ENCODE measurements at regions of chr2 and their contacts with region 1.

Region 1: GRCh38 chr2:69914170-69914960 is 544 bp upstream of the MXD1 start:
- DNase-seq: peak; percentile 99 to 100
- ATAC-seq: peak; percentile 94 to 95
- H3K4me3 ChIP-seq: peak overlapping the region; percentile 57
- H3K27ac ChIP-seq: peak overlapping the region; percentile 86 to 95
- H3K4me1 ChIP-seq: peaks cover 17% of the 10 kb centered on the region; the same call in 2 of the 3 replicates
- CTCF ChIP-seq: peak; percentile 42
- EP300 ChIP-seq: no peak
- POLR2A ChIP-seq: peak; percentile 88
- RAD21 ChIP-seq: peak; percentile 50 to 71

Region 2: DNA sequence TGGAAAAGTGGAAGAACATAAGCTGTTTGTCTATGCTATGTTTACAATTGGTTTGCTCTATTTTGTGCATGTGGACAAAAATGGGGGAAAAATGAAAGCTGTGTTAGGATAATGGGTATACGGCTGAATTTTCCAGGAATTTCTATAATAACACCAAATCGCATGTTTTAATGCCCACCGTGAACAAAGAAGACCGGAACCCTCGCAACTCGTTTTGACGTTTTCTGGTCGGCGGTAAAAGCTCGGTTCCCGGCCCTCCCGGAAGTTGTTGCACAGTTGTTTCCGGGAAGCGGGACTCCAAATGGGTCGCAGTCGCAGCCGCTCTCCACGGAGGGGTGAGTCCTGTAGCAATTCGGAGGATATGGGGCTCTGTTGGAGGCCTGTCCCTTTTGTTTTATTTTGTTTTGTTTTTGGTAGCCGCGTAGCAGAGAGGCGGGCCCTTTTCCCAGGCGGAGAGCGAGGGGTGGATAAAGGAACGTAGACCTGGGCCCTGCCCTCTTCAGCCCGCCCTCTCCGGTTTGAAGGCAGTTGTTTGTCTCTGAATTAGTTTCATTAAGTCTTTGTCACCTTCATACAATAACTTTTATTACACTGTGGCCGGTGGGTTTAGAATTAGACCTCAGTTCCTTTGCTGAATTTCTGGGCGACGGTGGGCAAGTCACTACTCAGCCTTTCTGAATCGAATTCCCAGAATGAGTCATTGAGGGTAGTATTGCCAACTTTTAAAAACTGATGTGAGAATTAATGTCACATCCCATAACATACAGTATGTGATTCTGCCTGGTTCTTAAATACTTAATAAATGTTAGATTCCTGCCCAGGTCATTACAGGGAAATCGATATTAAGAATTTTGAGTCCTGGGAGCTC is 20.4 kb before region 1 on chr2 and contains the start of gene SNRNP27:
- CTCF ChIA-PET with region 1: interaction called, 24 read pairs
- POLR2A ChIA-PET with region 1: interaction called, 17 read pairs
- DNase-seq: peak; percentile 89 to 94
- ATAC-seq: peak; percentile 90 to 93
- H3K4me3 ChIP-seq: peak within 1 kb of the TSS; percentile 69
- H3K27ac ChIP-seq: peak within 1 kb of the TSS; percentile 75 to 88
- H3K4me1 ChIP-seq: peaks cover 8% of the 10 kb centered on the region; the same call in 2 of the 3 replicates
- CTCF ChIP-seq: no peak
- EP300 ChIP-seq: no peak
- POLR2A ChIP-seq: peak; percentile 52
- RAD21 ChIP-seq: no peak; a peak in 1 of 5 replicates
- polyA plus RNA-seq, gene SNRNP27: 53.0 and 115 TPM in 2 replicates

Region 3: GRCh38 chr2:69946351-69947077 is 32.1 kb after region 1 on chr2:
- CTCF ChIA-PET with region 1: interaction called, 18 read pairs
- POLR2A ChIA-PET with region 1: interaction called, 3 read pairs
- DNase-seq: peak; percentile 60 to 69
- ATAC-seq: peak; percentile 82 to 84
- H3K4me3 ChIP-seq: no peak overlapping the region
- H3K27ac ChIP-seq: peak overlapping the region; percentile 49 to 69; a peak in 5 of 6 replicates
- H3K4me1 ChIP-seq: peaks cover 19% of the 10 kb centered on the region
- CTCF ChIP-seq: no peak
- EP300 ChIP-seq: no peak
- POLR2A ChIP-seq: no peak
- RAD21 ChIP-seq: no peak

Region 4: GRCh38 chr2:70070541-70071268 is 156.3 kb after region 1 on chr2:
- CTCF ChIA-PET with region 1: interaction called, 161 read pairs
- POLR2A ChIA-PET with region 1: interaction called, 27 read pairs
- DNase-seq: peak; percentile 92 to 97
- ATAC-seq: peak; percentile 99 to 100
- H3K4me3 ChIP-seq: no peak overlapping the region
- H3K27ac ChIP-seq: peak overlapping the region; percentile 8 to 54; a peak in 4 of 6 replicates
- H3K4me1 ChIP-seq: 0 out of 3 replicates have a peak, but pooled peaks cover 3% of the 10 kb centered on the region
- CTCF ChIP-seq: peak; percentile 79
- EP300 ChIP-seq: no peak
- POLR2A ChIP-seq: no peak
- RAD21 ChIP-seq: peak; percentile 80 to 87

Region 5: GRCh38 chr2:70124983-70125480 is 210.7 kb after region 1 on chr2:
- CTCF ChIA-PET with region 1: interaction called, 12 read pairs
- POLR2A ChIA-PET with region 1: interaction called, 42 read pairs
- DNase-seq: peak; percentile 70 to 71
- ATAC-seq: peak; percentile 83 to 86
- H3K4me3 ChIP-seq: peak overlapping the region; percentile 52
- H3K27ac ChIP-seq: peak overlapping the region; percentile 96 to 99
- H3K4me1 ChIP-seq: peaks cover 34% of the 10 kb centered on the region
- CTCF ChIP-seq: 0 out of 3 replicates have a peak, but pooled peaks have one; percentile 3
- EP300 ChIP-seq: no peak
- POLR2A ChIP-seq: peak; percentile 75; the same call in 1 of the 2 replicates
- RAD21 ChIP-seq: no peak

Region 6: GRCh38 chr2:70142590-70143313 is 228.4 kb after region 1 on chr2:
- CTCF ChIA-PET with region 1: interaction called, 89 read pairs
- POLR2A ChIA-PET with region 1: interaction called, 87 read pairs
- DNase-seq: peak; percentile 94 to 100
- ATAC-seq: peak; percentile 74 to 77
- H3K4me3 ChIP-seq: peak overlapping the region; percentile 63
- H3K27ac ChIP-seq: peak overlapping the region; percentile 96 to 100
- H3K4me1 ChIP-seq: peaks cover 23% of the 10 kb centered on the region
- CTCF ChIP-seq: peak; percentile 99
- EP300 ChIP-seq: peak; percentile 25 to 43; a peak in 1 of 5 replicates
- POLR2A ChIP-seq: peak; percentile 79
- RAD21 ChIP-seq: peak; percentile 98 to 100

Region 7: DNA sequence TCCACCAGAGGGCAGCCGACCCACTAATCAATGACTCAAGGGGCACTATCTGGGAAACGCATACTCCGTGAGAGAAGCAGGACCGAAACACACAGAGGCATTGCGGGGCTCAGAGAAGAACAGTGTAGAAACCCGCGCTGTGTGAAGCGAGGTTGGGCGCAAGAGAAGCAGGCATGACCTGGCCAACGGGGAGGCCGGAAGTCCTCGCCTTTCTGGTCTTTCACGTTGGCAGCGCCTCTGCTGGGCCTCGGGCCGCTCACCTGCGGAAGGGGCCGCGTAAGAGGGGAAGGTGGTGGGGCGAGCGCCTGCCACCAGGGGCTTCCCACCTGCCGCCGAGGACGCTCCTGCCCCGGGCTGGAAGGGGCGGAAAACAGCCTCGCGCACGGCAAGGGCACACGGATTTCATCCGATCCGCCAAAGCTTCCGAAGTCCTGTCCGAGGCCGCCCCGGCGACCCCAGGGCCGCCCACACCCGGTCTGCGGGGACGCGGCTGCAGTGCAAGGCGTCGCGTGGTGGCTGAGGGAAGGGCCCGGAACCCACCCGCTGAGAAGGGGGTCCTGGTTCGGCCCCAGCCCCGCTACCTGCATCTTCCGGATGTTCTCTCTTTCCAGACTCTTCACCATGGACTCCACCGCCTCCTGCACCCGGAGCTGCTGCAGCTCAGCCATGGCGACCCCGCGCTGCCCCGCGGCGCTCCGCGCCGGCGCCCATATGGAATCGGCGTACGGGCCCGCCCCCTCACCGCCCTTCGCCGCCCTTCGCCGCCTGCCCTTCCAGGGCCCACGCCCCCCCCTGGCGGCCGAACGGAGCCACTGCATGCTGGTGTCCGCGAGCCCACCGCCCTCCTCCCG is 387.2 kb after region 1 on chr2 and contains the start of gene FAM136A:
- CTCF ChIA-PET with region 1: interaction called, 15 read pairs
- POLR2A ChIA-PET with region 1: no interaction called
- DNase-seq: peak; percentile 78 to 89
- ATAC-seq: peak; percentile 86 to 94
- H3K4me3 ChIP-seq: peak within 1 kb of the TSS; percentile 95
- H3K27ac ChIP-seq: peak within 1 kb of the TSS; percentile 95 to 96
- H3K4me1 ChIP-seq: peaks cover 6% of the 10 kb centered on the region
- CTCF ChIP-seq: peak; percentile 75
- EP300 ChIP-seq: no peak
- POLR2A ChIP-seq: peak; percentile 96
- RAD21 ChIP-seq: peak; percentile 47 to 55; a peak in 4 of 5 replicates
- polyA plus RNA-seq, gene FAM136A: 88.5 and 117 TPM in 2 replicates